Pancreas (tissue), 10 donors: ENCODE measurements at regions of chr20 and their contacts with region 1.

Region 1: DNA sequence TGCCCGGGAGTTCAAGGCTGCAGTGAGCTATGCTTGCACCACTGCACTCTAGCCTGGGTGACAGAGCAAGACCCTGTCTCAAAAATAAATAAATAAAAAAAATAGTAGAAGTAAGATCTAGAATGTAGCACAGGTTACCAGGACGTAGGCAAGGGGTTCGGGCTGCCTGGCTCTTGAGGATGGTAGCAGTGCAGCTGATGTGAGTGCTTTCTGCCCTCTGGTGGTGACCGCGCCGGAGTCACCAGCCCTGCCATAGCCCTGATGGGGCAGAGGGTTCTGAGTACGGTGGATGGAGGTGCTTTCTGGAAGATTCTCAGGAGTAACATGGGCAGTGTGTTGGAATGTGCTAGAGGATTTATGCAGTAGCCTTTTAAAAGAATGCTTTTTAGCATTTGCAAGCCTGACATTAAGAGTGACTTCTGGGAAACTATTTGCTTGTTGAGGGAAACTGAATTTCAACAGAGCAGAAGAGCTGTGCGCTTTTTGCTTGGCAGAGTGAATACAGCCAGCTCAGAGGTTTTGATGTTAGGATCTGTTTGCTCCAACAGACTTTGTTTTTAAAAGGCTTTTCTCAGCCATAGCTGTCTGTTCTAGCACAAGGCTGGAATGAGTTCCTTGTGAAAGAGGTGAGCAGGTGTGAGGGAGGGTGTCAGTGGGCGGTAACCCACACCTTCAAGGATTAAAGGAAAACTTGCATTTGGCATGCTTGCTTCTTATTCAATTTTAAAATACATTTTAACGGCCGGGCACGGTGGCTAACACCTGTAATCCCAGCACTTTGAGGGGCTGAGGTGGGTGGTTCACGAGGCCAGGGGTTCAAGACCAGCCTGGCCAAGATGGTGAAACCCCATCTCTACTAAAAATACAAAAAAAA is 65.9 kb downstream of the PTPN1 start:
- DNase-seq: peak in 1 of 6 donors; percentile 42
- ATAC-seq: peak in 3 of 4 donors; percentile 69 to 73 (median 70)
- H3K4me3 ChIP-seq: no peak overlapping the region
- H3K27ac ChIP-seq: no peak overlapping the region
- H3K4me1 ChIP-seq: peaks cover 0 to 3% (median 0%) of the 10 kb centered on the region in 3 donors
- H3K27me3 ChIP-seq: no peaks in the 10 kb centered on the region
- CTCF ChIP-seq: peak in 3 of 4 donors; percentile 22 to 26 (median 24)

Region 2: DNA sequence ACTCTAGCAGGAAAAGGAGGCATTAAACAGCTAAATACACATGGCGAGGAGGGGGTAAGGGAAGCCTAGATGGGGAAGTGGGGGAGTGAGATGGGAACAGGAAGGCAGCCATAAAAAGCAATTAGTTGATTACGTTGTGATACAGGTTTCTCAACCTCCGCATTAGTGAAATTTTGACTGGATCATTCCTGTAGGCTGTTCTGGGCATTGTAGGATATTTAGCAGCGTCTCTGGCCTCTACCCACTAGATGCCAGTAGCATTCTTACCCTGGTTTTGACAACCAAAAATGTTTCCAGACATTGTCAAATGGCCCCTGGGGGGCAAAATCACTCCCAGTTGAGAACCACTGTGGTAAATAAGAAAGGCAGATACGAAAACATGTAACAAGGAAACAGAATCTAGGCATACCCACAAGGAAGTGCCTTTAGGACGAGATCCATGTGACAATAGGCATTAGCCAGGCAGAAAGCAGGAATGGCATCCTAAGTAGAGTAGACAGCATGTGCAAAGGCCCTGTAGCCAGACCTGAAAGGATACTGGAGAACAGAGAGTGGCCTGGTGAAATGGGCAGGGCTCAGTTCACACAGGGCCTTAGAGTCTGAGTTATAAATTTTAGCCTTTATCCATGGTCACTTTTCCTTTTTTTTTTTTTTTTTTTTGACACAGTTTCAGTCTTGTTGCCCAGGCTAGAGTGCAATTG is 91.7 kb before region 1 on chr20:
- intact Hi-C with region 1: loop called in 2 of 3 experiments (anchors 5 to 10 kb)
- DNase-seq: no peak
- ATAC-seq: peak in 1 of 4 donors; percentile 33
- H3K4me3 ChIP-seq: peak overlapping the region in 1 of 4 donors; percentile 48
- H3K27ac ChIP-seq: peak overlapping the region in 2 of 4 donors; percentile 76
- H3K4me1 ChIP-seq: no peaks in the 10 kb centered on the region
- H3K27me3 ChIP-seq: no peaks in the 10 kb centered on the region
- CTCF ChIP-seq: no peak

Region 3: GRCh38 chr20:50794846-50795634 is 219.0 kb after region 1 on chr20 and contains the start of gene BCAS4:
- intact Hi-C with region 1: no loop called
- DNase-seq: peak in 5 of 6 donors; percentile 82 to 92 (median 90)
- ATAC-seq: peak; percentile 87 to 91 (median 90)
- H3K4me3 ChIP-seq: peak within 1 kb of the TSS; percentile 40 to 76 (median 72)
- H3K27ac ChIP-seq: peak within 1 kb of the TSS in 3 of 4 donors; percentile 16 to 46 (median 33)
- H3K4me1 ChIP-seq: peaks cover 0 to 7% (median 4%) of the 10 kb centered on the region in 3 donors
- H3K27me3 ChIP-seq: no peaks in the 10 kb centered on the region
- CTCF ChIP-seq: peak; percentile 73 to 94 (median 80)
- total RNA-seq, gene BCAS4: 0.85 to 1.9 (median 1.7) TPM